ENCODE measurements at regions of chr14 and their contacts with region 1.

Region 1: DNA sequence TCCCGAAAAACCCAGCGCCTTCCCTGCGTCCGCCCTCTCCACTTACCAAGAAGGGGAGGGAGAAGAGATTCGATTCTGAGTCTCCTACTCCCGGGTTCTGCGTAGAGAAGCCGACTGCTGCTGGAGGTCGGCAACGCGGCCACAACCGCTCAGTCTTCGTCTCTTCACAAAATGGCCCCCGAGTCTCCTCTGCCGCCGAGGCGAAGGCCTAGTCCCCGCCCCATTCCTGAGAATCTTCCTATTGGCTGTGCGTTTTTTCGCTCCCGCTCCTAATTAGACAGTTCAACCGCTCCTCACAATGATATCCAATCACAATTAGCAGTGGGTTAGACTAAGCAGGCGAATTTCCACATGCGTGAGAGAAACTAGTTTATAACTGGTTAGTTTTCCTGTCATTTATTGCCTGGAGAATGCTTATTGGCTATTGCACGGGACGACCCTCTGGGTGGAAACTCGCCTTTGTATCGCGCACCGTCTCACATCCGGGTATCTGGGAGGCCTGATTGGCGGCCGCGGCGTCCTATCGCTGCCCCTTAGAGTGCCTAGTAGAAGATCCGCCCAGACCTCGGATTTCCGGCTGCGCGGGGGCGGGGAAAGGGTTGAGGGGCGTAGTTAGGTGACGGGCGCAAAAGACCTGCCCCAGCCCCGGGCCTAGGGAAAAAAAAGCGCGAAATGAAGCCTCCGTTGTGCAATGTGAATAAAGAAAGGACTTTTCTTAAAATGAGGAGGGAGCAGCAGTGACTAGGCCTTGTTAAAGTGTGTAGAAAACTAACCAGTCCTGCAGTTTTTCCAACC is at the start of gene HNRNPC:
- DNase-seq: peak; percentile 98 to 100 (median 100)
- H3K4me3 ChIP-seq: peak within 1 kb of the TSS; percentile 37 to 100 (median 92)
- H3K27ac ChIP-seq: peak within 1 kb of the TSS; percentile 80 to 99 (median 95)
- H3K27me3 ChIP-seq: no peaks in the 10 kb centered on the region
- CTCF ChIP-seq: peak in 10 of 56 donors; percentile 3 to 25 (median 12)
- total RNA-seq, gene HNRNPC: 304 to 455 (median 370) TPM

Region 2: GRCh38 chr14:21233457-21234076 is 35.9 kb before region 1 on chr14:
- intact Hi-C with region 1: loop called in 1 of 2 experiments (anchors 5 kb)
- DNase-seq: no peak
- H3K4me3 ChIP-seq: peak overlapping the region in 4 of 59 donors; percentile 7 to 15 (median 10)
- H3K27ac ChIP-seq: peak overlapping the region in 1 of 59 donors; percentile 21
- H3K27me3 ChIP-seq: no peaks in the 10 kb centered on the region
- CTCF ChIP-seq: peak in 36 of 56 donors; percentile 9 to 49 (median 26)

Region 3: DNA sequence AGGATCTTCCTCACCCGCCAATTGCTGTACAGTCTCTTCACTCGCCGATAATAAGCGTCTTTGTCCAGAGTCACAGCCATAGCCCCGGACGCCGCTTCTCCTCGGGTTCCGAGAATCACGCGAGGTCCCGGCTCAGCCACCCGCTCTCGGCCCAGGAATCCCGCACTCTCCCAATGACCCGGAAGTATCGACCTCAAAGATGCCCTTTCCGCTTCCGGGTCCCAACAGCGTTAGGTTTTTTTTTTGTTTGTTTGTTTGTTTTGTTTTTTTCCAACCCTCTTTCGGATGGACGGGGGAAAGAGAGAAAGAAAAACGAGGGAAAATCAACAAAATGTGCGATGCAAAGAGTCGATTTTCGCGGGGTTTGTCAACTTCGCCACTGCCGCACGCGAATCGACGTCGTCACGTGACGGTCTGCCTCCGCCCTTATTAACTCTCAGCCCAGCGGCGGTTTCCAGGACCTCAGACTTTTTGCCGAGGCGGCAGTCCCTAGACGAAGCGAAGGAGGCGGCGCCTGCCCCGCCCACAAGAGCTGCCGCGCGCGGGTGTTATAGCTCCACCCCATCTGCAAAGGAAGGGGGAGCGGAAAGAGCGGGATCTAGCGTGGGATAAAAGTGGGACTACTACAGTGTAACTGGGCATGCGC is 114.5 kb after region 1 on chr14 and contains the start of gene SUPT16H:
- intact Hi-C with region 1: loop called (anchors 1 to 2 kb)
- DNase-seq: peak; percentile 81 to 94 (median 92)
- H3K4me3 ChIP-seq: peak within 1 kb of the TSS; percentile 67 to 99 (median 87)
- H3K27ac ChIP-seq: peak within 1 kb of the TSS; percentile 79 to 98 (median 95)
- H3K27me3 ChIP-seq: no peaks in the 10 kb centered on the region
- CTCF ChIP-seq: peak in 28 of 56 donors; percentile 5 to 50 (median 22)
- total RNA-seq, gene SUPT16H: 40.1 to 82.6 (median 62.0) TPM